ENCODE measurements at regions of chr2 and their contacts with region 1.

Region 1: GRCh38 chr2:65186872-65187851 is 40.5 kb upstream of the ACTR2 start:
- DNase-seq: peak; percentile 56
- H3K4me3 ChIP-seq: no peak overlapping the region
- H3K27ac ChIP-seq: no peak overlapping the region
- H3K27me3 ChIP-seq: peaks cover 6% of the 10 kb centered on the region
- CTCF ChIP-seq: peak; percentile 92

Region 2: GRCh38 chr2:65056215-65057053 is 130.7 kb before region 1 on chr2 and contains the start of gene CEP68:
- CTCF ChIA-PET with region 1: interaction called, 20 read pairs
- POLR2A ChIA-PET with region 1: interaction called, 8 read pairs
- DNase-seq: peak; percentile 93
- H3K4me3 ChIP-seq: peak within 1 kb of the TSS; percentile 78
- H3K27ac ChIP-seq: no peak within 1 kb of the TSS
- H3K27me3 ChIP-seq: no peaks in the 10 kb centered on the region
- CTCF ChIP-seq: no peak
- polyA plus RNA-seq, gene CEP68: 7.3 and 7.9 TPM in 2 replicates

Region 3: GRCh38 chr2:65064728-65065552 is 122.2 kb before region 1 on chr2:
- CTCF ChIA-PET with region 1: interaction called, 20 read pairs
- POLR2A ChIA-PET with region 1: no interaction called
- DNase-seq: peak; percentile 79
- H3K4me3 ChIP-seq: no peak overlapping the region
- H3K27ac ChIP-seq: peak overlapping the region; percentile 77
- H3K27me3 ChIP-seq: no peaks in the 10 kb centered on the region
- CTCF ChIP-seq: peak; percentile 62

Region 4: DNA sequence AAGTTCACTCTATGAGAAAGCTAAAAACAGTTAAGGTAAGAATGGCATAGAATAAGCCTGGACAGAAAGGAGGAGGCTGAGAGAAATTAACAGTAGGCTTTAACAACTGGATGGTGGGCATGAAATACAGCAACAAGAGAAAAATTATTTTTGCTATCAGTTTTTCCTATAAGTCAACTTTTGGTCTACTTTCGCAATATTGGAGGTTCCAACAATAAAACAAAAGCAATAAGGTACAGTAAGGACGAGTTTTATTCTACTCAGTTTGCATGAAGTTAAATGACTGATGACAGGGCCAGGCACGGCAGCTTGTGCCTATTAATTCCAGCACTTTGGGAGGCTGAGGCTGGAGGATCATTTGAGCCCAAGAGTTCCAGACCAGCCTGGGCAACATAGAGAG is 74.5 kb before region 1 on chr2:
- CTCF ChIA-PET with region 1: interaction called, 10 read pairs
- POLR2A ChIA-PET with region 1: no interaction called
- DNase-seq: no peak
- H3K4me3 ChIP-seq: no peak overlapping the region
- H3K27ac ChIP-seq: no peak overlapping the region
- H3K27me3 ChIP-seq: no peaks in the 10 kb centered on the region
- CTCF ChIP-seq: no peak

Region 5: GRCh38 chr2:65169760-65170136 is 17.4 kb before region 1 on chr2:
- CTCF ChIA-PET with region 1: interaction called, 34 read pairs
- POLR2A ChIA-PET with region 1: no interaction called
- DNase-seq: no peak
- H3K4me3 ChIP-seq: no peak overlapping the region
- H3K27ac ChIP-seq: no peak overlapping the region
- H3K27me3 ChIP-seq: no peaks in the 10 kb centered on the region
- CTCF ChIP-seq: no peak

Region 6: GRCh38 chr2:65227425-65228262 is 40.5 kb after region 1 on chr2 and contains the start of gene ACTR2:
- CTCF ChIA-PET with region 1: interaction called, 15 read pairs
- POLR2A ChIA-PET with region 1: no interaction called
- DNase-seq: peak; percentile 93
- H3K4me3 ChIP-seq: peak within 1 kb of the TSS; percentile 100
- H3K27ac ChIP-seq: peak within 1 kb of the TSS; percentile 86
- H3K27me3 ChIP-seq: no peaks in the 10 kb centered on the region
- CTCF ChIP-seq: no peak
- polyA plus RNA-seq, gene ACTR2: 199 and 240 TPM in 2 replicates